Activated B cell treated with CpG ODN at 0.5 μM for 24 hours (primary cell): ENCODE measurements at regions of chr11 and their contacts with region 1.

Region 1: GRCh38 chr11:82873919-82874333 is 26.3 kb downstream of the PRCP start:
- DNase-seq: no peak
- ATAC-seq: no peak
- H3K4me3 Mint-ChIP-seq: no peak overlapping the region
- H3K27ac Mint-ChIP-seq: no peak overlapping the region
- H3K4me1 Mint-ChIP-seq: peaks cover 2% of the 10 kb centered on the region
- H3K27me3 Mint-ChIP-seq: no peaks in the 10 kb centered on the region
- CTCF ChIP-seq: no peak

Region 2: GRCh38 chr11:82823647-82824619 is 50.0 kb before region 1 on chr11:
- CTCF ChIA-PET with region 1: no interaction called
- POLR2A ChIA-PET with region 1: no interaction called
- intact Hi-C with region 1: no loop called
- DNase-seq: no peak
- ATAC-seq: no peak
- H3K4me3 Mint-ChIP-seq: no peak overlapping the region
- H3K27ac Mint-ChIP-seq: no peak overlapping the region
- H3K4me1 Mint-ChIP-seq: no peaks in the 10 kb centered on the region
- H3K27me3 Mint-ChIP-seq: no peaks in the 10 kb centered on the region
- CTCF ChIP-seq: no peak

Region 3: DNA sequence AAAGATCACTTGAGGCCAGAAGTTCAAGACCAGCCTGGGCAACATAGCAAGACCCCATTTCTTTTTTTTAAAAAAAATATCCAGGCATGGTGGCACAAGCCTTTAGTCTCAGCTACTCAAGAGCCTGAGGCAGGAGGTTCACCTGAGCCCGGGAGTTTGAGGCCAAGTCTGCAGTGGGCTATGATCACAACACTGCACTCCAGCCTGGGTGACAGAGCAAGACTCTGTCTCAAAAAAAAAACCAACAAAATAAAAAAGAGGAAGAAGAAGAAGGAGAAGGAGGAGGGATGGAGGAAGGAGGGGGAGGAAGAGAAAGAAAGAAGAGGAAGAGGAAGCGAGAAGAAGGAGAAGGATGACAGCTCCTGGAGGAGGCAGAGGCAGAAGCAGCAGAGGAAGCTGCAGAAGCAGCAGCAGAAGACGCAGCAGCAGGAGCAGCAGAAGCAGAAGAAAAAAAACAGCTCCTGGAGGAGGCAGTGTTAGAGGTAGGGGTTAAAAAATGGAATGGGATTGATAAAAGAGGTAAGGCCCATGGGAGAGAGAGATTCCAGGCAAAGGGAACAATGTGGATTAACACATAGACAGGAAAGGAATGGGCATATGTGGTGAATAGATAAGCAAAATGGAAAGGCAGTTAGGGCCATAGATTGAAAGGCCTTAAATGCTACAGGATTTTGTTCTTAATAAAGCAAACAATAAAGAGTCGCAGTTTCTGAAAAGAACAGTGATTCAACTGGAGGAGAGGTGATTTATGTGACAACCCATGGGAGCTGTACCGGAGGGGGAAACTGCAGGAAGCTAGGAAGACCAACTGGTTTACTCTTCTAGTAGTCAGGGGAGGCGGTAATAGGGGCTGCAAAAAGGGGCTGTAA is 15.4 kb after region 1 on chr11:
- CTCF ChIA-PET with region 1: interaction called, 23 read pairs
- POLR2A ChIA-PET with region 1: no interaction called
- intact Hi-C with region 1: loop called (anchors 2 kb)
- DNase-seq: no peak
- ATAC-seq: peak; percentile 64
- H3K4me3 Mint-ChIP-seq: no peak overlapping the region
- H3K27ac Mint-ChIP-seq: no peak overlapping the region
- H3K4me1 Mint-ChIP-seq: peaks cover 22% of the 10 kb centered on the region
- H3K27me3 Mint-ChIP-seq: no peaks in the 10 kb centered on the region
- CTCF ChIP-seq: no peak

Region 4: DNA sequence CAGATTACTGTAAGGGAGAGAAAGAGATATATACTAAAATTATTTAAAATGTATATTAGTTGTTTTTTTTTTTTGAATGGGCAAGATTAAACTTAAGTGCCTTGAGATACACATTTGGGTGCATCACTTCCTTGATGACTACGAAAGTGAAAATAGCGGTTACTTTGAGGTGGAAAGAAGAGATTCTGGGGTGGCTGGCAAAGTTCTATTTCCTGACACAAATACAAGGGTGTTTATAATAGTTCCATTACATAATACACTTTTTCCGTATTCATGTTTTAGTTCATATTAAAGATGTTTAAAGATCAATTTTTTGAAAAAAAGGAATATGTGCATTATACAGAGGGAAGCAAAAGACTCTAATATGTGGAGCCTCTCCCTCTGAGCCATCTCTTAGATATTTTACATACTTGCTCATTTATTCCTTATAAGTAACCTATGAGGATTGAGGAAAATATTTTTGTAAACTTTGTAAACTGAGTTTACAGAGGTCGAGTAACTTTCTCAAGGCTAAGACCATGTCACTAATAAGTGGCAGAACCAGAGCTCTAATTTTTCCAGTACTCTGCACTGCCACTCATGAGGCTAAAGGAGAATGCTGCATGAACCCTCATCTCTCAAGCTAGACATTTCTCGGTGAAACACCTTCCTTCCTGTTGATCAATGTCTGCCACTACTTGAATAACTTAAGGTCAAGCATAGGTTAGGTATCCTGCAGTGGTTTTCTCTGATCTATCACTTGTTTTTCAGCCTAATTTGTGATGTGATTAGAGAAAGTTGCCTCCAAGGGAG is 86.3 kb after region 1 on chr11:
- CTCF ChIA-PET with region 1: no interaction called
- POLR2A ChIA-PET with region 1: no interaction called
- intact Hi-C with region 1: no loop called
- DNase-seq: no peak
- ATAC-seq: peak; percentile 71
- H3K4me3 Mint-ChIP-seq: peak overlapping the region; percentile 46
- H3K27ac Mint-ChIP-seq: peak overlapping the region; percentile 87
- H3K4me1 Mint-ChIP-seq: peaks cover 66% of the 10 kb centered on the region
- H3K27me3 Mint-ChIP-seq: no peaks in the 10 kb centered on the region
- CTCF ChIP-seq: no peak

Region 5: DNA sequence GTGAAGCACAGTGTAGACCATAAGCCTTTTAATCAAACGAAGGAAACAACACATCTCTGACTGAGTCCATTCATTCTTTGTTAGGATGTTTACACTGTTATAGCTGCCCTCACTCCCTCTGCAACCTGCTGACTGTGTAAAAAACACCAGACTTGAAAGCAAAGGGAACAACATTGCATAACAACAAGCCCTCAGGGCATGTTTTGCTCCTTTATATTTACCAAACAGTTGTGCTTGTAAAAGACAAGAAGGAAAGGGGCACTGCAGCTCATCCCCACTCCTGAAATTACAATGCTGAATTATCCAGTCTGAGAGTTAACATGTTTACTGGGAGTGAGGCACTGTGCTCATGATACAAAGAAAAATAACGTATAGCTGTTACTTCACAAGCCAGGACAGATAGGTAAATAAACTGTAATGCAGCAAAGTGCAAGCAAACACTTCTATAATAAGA is 151.4 kb after region 1 on chr11:
- CTCF ChIA-PET with region 1: no interaction called
- POLR2A ChIA-PET with region 1: no interaction called
- intact Hi-C with region 1: no loop called
- DNase-seq: no peak
- ATAC-seq: no peak
- H3K4me3 Mint-ChIP-seq: no peak overlapping the region
- H3K27ac Mint-ChIP-seq: no peak overlapping the region
- H3K4me1 Mint-ChIP-seq: peaks cover 81% of the 10 kb centered on the region
- H3K27me3 Mint-ChIP-seq: no peaks in the 10 kb centered on the region
- CTCF ChIP-seq: no peak

Region 6: GRCh38 chr11:83097429-83098075 is 223.6 kb after region 1 on chr11:
- CTCF ChIA-PET with region 1: no interaction called
- POLR2A ChIA-PET with region 1: no interaction called
- intact Hi-C with region 1: no loop called
- DNase-seq: no peak
- ATAC-seq: no peak
- H3K4me3 Mint-ChIP-seq: no peak overlapping the region
- H3K27ac Mint-ChIP-seq: no peak overlapping the region
- H3K4me1 Mint-ChIP-seq: peaks cover 10% of the 10 kb centered on the region
- H3K27me3 Mint-ChIP-seq: no peaks in the 10 kb centered on the region
- CTCF ChIP-seq: no peak